ENCODE measurements at regions of chr3 and their contacts with region 1.

Region 1: DNA sequence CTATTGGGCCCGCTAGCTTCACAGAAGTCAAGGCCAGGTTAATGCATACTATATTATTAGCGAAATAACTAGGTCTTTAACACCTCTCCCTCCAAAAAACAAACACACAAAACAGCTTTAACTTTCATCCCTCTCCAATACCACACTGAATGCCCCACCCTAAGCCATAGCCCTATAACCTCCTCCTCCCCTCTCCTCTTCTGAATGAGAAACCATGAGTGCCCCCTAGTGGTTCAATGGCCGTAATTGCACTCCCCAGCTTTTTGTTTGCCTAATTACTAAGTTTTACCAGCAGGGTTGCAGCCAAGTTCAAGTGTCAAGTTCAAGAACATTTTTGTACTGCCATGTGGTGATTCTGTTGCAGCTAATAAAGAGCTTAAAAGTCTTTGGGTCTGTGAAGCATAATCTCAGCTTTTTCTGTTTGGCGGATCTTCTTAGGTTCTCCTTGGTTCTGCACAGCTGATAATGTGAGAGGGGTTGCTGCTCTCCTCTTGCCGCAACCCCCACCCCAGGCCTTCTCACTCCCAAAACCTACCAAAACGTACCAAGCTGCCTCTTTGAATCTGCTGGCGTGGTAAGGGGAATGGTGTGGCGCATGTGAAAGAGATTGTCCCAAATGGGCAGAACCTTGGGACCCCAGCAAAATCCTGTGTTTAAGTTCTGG is 57.9 kb downstream of the RPL22L1 start:
- DNase-seq: peak; percentile 90
- H3K4me3 Mint-ChIP-seq: peak overlapping the region; percentile 55
- H3K27ac Mint-ChIP-seq: peak overlapping the region; percentile 82
- H3K4me1 Mint-ChIP-seq: peaks cover 37% of the 10 kb centered on the region
- H3K27me3 Mint-ChIP-seq: no peaks in the 10 kb centered on the region
- CTCF ChIP-seq: peak; percentile 89

Region 2: GRCh38 chr3:170189398-170190256 is 622.4 kb before region 1 on chr3:
- CTCF ChIA-PET with region 1: interaction called, 4 read pairs
- POLR2A ChIA-PET with region 1: no interaction called
- intact Hi-C with region 1: loop called (anchors 5 kb)
- DNase-seq: no peak
- H3K4me3 Mint-ChIP-seq: no peak overlapping the region
- H3K27ac Mint-ChIP-seq: no peak overlapping the region
- H3K4me1 Mint-ChIP-seq: no peaks in the 10 kb centered on the region
- H3K27me3 Mint-ChIP-seq: no peaks in the 10 kb centered on the region
- CTCF ChIP-seq: no peak

Region 3: GRCh38 chr3:170440346-170440745 is 371.7 kb before region 1 on chr3:
- CTCF ChIA-PET with region 1: interaction called, 10 read pairs
- POLR2A ChIA-PET with region 1: no interaction called
- intact Hi-C with region 1: no loop called
- DNase-seq: peak; percentile 76
- H3K4me3 Mint-ChIP-seq: no peak overlapping the region
- H3K27ac Mint-ChIP-seq: no peak overlapping the region
- H3K4me1 Mint-ChIP-seq: peaks cover 11% of the 10 kb centered on the region
- H3K27me3 Mint-ChIP-seq: no peaks in the 10 kb centered on the region
- CTCF ChIP-seq: no peak

Region 4: DNA sequence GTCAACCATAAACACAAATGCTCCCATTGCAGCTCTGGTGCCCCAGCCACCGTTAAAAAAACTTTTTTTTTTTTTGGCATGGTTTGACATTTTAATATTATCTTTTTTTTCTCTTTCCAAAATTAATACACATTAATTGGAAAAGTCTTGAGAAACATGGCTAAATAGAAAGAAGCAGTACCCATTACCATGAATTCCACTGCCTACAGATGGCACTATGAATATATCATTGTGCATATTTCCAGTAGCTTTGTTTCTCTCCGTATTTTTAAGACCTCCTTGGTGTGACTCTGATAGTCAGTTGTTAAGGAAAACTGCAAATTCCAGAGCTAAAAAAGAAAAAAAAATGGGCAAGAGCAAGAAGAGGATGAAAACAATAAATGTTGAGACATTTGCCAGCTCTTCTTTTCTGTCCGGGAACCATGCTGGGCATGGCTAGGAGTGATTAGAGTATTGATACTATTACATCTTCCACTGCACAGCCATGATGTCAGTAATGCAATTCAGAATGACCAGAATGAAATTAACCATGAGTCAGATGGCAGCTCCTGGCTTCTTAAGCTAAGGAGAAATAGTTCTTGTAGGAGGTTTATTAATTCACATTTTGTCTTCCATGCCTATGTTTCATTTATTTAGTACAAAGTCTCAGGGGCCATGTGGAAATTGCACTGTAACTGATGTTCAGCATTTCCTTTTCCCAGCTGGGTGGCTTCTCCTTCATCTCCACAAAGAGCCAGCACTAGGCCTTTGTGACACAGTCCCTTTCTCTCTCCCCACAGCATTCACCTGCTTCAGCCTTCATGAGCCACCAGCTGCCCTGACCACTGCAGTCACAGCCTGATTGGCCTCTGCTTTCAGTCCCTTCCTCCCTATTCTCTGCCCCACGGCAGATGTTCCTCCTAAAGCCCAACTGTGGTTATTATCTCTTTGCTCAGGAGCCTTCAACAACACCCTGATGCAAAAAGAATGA is 258.0 kb before region 1 on chr3:
- CTCF ChIA-PET with region 1: interaction called, 38 read pairs
- POLR2A ChIA-PET with region 1: no interaction called
- intact Hi-C with region 1: loop called (anchors 5 kb)
- DNase-seq: no peak
- H3K4me3 Mint-ChIP-seq: no peak overlapping the region
- H3K27ac Mint-ChIP-seq: no peak overlapping the region
- H3K4me1 Mint-ChIP-seq: no peaks in the 10 kb centered on the region
- H3K27me3 Mint-ChIP-seq: no peaks in the 10 kb centered on the region
- CTCF ChIP-seq: peak; percentile 11

Region 5: DNA sequence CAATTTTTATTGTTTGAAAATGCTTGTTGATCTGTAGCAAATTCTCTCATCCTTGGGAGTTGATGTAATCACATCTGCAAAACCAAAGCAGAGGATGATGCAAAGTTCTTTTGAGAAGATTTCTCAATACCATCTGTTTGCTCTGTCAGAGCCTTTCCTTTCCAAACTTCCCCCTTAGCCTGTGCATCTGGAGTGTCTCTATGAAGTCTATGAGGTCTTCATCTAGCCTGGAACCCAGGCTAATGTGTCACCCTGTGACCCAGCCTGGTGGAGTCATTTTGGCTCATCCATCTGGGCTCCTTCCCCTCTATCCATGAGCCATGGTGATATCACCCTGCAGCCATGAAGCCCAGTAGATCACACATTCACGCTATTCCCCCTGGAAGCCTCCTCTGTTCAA is 103.0 kb before region 1 on chr3:
- CTCF ChIA-PET with region 1: interaction called, 9 read pairs
- POLR2A ChIA-PET with region 1: interaction called, 3 read pairs
- intact Hi-C with region 1: loop called (anchors 5 kb)
- DNase-seq: peak; percentile 60
- H3K4me3 Mint-ChIP-seq: no peak overlapping the region
- H3K27ac Mint-ChIP-seq: peak overlapping the region; percentile 33
- H3K4me1 Mint-ChIP-seq: peaks cover 19% of the 10 kb centered on the region
- H3K27me3 Mint-ChIP-seq: no peaks in the 10 kb centered on the region
- CTCF ChIP-seq: no peak

Region 6: DNA sequence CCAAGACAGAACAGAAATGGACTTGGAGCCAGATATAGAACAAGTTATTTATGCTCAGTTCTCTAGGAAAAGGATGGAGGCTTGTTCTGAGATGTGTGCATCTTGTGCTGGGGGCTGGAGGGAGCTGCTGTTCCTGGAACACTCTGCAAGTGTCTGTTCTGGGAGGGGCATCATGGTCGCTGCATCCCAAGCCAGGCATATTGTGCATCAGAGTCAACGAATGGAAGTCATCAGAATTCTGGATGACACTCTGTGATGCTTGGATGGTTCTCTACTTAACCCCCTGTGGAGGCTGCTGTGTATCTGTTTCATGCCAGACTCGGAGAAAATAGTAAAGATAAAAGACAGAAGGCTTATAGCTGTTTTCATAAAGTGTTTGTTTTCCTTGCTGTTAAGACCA is 23.3 kb after region 1 on chr3:
- CTCF ChIA-PET with region 1: interaction called, 10 read pairs
- POLR2A ChIA-PET with region 1: no interaction called
- intact Hi-C with region 1: no loop called
- DNase-seq: no peak
- H3K4me3 Mint-ChIP-seq: no peak overlapping the region
- H3K27ac Mint-ChIP-seq: no peak overlapping the region
- H3K4me1 Mint-ChIP-seq: peaks cover 4% of the 10 kb centered on the region
- H3K27me3 Mint-ChIP-seq: no peaks in the 10 kb centered on the region
- CTCF ChIP-seq: no peak